ENCODE measurements at regions of chr12 and their contacts with region 1.

Region 1: DNA sequence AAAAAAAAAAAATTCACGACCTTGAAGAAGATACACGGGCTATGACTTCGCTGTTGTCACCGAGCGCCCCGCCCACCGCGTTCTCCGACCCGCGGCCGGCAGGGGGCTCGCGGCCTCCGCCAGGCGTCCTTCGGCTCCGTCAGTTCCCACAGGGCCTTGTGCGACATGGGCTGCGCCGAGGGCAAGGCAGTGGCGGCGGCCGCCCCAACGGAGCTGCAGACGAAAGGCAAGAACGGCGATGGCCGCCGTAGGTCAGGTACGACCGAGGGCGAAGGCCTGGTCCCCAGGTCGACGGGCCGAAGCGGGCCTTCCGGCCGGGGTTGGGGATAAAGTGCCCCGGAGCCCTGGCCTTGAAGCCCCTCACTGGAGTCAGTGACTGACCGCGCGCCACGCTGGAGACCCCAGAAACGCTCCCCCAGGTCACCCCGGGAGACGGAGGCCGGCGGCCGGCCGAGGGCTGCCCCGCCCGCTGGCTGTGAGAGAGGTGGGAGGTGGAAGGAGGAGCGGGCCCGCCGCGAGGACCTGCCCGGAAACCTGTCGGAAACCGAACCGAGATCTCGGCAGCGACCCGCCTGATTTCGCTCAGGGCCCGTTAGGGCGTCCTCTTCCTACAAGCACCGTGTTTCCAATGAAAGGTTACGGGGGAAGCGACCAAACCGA is at the start of gene TXNRD1:
- DNase-seq: peak; percentile 63 to 91 (median 77)
- ATAC-seq: peak; percentile 89 to 95 (median 94)
- H3K4me3 ChIP-seq: peak within 1 kb of the TSS; percentile 62 to 69
- H3K4me3 Mint-ChIP-seq: peak within 1 kb of the TSS; percentile 69 to 79 (median 77)
- H3K27ac ChIP-seq: peak within 1 kb of the TSS; percentile 53
- H3K27ac Mint-ChIP-seq: peak within 1 kb of the TSS; percentile 67 to 79
- H3K4me1 ChIP-seq: peaks cover 4 to 14% of the 10 kb centered on the region in 2 experiments
- H3K4me1 Mint-ChIP-seq: peaks cover 17 to 26% (median 26%) of the 10 kb centered on the region in 3 donors
- H3K27me3 ChIP-seq: no peaks in the 10 kb centered on the region
- H3K27me3 Mint-ChIP-seq: peaks cover 1 to 4% of the 10 kb centered on the region in 2 donors
- total RNA-seq, gene TXNRD1: 33.1 to 91.7 (median 68.9) TPM

Region 2: DNA sequence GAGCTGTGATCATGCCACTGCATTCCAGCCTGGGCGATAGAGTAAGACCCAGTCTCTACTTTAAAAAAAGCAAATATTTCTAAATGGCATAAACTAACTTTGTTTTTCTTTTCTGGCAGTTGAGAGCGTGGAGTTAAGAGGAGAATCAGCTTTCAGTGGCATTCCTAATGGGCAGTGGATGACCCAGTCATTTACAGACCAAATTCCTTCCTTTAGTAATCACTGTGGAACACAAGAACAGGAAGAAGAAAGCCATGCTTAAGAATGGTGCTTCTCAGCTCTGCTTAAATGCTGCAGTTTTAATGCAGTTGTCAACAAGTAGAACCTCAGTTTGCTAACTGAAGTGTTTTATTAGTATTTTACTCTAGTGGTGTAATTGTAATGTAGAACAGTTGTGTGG is 228.9 kb before region 1 on chr12:
- CTCF ChIA-PET with region 1: interaction called in 1 of 2 experiments, 13 read pairs
- POLR2A ChIA-PET with region 1: no interaction called
- DNase-seq: no peak
- ATAC-seq: no peak
- H3K4me3 ChIP-seq: no peak overlapping the region
- H3K4me3 Mint-ChIP-seq: no peak overlapping the region
- H3K27ac ChIP-seq: no peak overlapping the region
- H3K27ac Mint-ChIP-seq: no peak overlapping the region
- H3K4me1 ChIP-seq: no peaks in the 10 kb centered on the region
- H3K4me1 Mint-ChIP-seq: no peaks in the 10 kb centered on the region
- H3K27me3 ChIP-seq: no peaks in the 10 kb centered on the region
- H3K27me3 Mint-ChIP-seq: no peaks in the 10 kb centered on the region

Region 3: DNA sequence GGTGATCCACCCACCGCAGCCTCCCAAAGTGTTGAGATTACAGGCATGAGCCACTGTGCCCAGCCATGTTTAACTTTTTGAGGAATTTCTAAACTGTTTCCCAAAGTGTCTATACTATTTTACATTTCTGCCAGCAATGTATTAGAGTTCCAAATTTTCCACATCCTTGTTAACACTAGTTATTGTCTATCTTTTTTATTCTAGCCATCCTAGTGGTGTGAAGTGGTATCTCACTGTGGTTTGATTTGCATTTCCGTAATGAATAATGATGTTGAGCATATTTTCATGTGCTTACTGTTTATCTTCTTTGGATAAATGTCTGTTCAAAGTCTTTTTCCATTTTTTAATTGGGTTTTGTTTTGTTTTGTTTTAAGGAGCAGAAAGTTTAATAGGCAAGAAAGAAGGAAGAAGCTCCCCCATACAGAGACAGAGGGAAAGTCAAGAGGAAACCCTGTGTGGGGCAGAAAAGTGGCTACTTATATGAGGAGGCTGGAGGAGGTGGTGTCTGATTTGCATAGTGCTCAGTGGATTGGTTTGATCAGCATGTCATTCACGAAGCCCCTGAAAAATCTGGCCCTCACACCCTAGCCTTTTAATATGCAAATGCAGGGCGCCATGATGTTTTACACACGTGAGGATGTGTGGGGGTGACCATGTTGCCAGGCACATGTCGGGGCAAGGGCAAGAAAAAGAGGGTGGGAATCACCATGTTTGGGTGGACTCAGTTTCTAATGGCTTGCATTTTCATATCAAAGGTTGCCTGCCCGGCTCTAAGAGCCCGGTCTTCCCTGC is 14.7 kb after region 1 on chr12:
- CTCF ChIA-PET with region 1: interaction called in 1 of 2 experiments, 11 read pairs
- POLR2A ChIA-PET with region 1: no interaction called
- DNase-seq: no peak
- ATAC-seq: no peak
- H3K4me3 ChIP-seq: no peak overlapping the region
- H3K4me3 Mint-ChIP-seq: no peak overlapping the region
- H3K27ac ChIP-seq: no peak overlapping the region
- H3K27ac Mint-ChIP-seq: no peak overlapping the region
- H3K4me1 ChIP-seq: no peaks in the 10 kb centered on the region
- H3K4me1 Mint-ChIP-seq: no peaks in the 10 kb centered on the region
- H3K27me3 ChIP-seq: peaks cover 0 to 8% of the 10 kb centered on the region in 2 experiments
- H3K27me3 Mint-ChIP-seq: peaks cover 0 to 3% of the 10 kb centered on the region in 2 donors